ENCODE measurements at regions of chr2 and their contacts with region 1.

Region 1: GRCh38 chr2:120693121-120693520 is 42.5 kb upstream of the GLI2 start:
- DNase-seq: no peak
- H3K4me3 Mint-ChIP-seq: no peak overlapping the region
- H3K27ac Mint-ChIP-seq: no peak overlapping the region
- H3K4me1 Mint-ChIP-seq: peaks cover 5% of the 10 kb centered on the region
- H3K27me3 Mint-ChIP-seq: peaks cover 25% of the 10 kb centered on the region

Region 2: DNA sequence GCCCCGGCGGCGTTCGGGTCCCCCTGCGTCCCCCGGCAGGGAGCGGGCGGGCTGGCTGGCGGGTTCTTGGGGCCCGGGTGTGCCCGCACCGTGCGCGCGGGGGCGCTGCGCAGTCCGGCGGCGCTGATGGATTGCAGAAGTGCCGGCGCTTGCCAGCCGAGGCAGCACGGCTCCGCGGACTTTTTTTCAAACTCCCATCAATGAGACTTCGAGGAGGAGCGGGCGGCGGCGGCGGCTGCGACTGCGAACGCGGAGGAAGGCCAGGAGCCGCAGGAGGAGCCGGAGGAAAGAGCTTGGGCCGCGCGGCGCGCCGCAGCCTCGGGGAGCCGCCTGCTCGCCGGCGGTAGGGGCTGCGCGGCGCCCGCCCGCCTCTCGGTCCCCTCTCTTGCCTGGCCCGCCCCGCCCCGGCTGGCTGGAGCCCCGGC is 42.6 kb after region 1 on chr2 and contains the start of gene GLI2:
- intact Hi-C with region 1: loop called (anchors 2 kb)
- DNase-seq: peak; percentile 28
- H3K4me3 Mint-ChIP-seq: peak within 1 kb of the TSS; percentile 54
- H3K27ac Mint-ChIP-seq: no peak within 1 kb of the TSS
- H3K4me1 Mint-ChIP-seq: peaks cover 11% of the 10 kb centered on the region
- H3K27me3 Mint-ChIP-seq: peaks cover 60% of the 10 kb centered on the region
- total RNA-seq, gene GLI2: 0.07 TPM in 1 of 2 replicates, not detected in the other

Region 3: GRCh38 chr2:121071034-121071504 is 377.9 kb after region 1 on chr2:
- intact Hi-C with region 1: loop called (anchors 1 kb)
- DNase-seq: peak; percentile 26
- H3K4me3 Mint-ChIP-seq: no peak overlapping the region
- H3K27ac Mint-ChIP-seq: no peak overlapping the region
- H3K4me1 Mint-ChIP-seq: no peaks in the 10 kb centered on the region
- H3K27me3 Mint-ChIP-seq: peaks cover 9% of the 10 kb centered on the region

Measured in activated T-helper 2 cell treated with anti-CD3 and anti-CD28 coated beads, Interferon-gamma antibody, Interleukin-2, Interleukin-4, amounts not matched to agents 10 μg/mL and 5 μg/mL and 100 μg/mL, durations not matched to agents 14 hours and 24 hours and 36 hours (primary cell).